ENCODE measurements at regions of chr15 and their contacts with region 1.

Region 1: DNA sequence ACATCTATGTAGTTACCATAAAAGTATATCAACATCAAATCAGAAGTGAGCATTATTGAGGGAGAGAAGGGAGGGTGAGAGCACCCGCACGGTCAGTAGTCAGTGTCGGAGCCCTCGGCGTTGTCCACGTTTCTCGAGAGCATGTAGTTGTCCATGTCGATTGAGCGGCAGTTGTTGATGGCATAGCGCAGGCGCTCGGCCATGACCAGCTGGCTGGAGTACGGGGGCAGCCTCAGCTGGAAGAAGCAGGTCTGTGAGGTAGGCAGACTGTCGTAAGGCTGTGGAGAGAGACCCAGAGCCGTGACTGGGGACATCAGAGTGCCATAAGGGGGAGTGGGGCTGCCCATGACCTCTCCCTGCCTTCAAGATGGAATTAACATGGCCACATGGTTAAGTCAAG is 11.8 kb downstream of the FBXL22 start:
- DNase-seq: no peak
- H3K4me3 ChIP-seq: no peak overlapping the region
- H3K27ac ChIP-seq: no peak overlapping the region
- H3K4me1 ChIP-seq: peaks cover 4% of the 10 kb centered on the region
- H3K27me3 ChIP-seq: no peaks in the 10 kb centered on the region
- CTCF ChIP-seq: no peak
- EP300 ChIP-seq: no peak
- POLR2A ChIP-seq: no peak

Region 2: DNA sequence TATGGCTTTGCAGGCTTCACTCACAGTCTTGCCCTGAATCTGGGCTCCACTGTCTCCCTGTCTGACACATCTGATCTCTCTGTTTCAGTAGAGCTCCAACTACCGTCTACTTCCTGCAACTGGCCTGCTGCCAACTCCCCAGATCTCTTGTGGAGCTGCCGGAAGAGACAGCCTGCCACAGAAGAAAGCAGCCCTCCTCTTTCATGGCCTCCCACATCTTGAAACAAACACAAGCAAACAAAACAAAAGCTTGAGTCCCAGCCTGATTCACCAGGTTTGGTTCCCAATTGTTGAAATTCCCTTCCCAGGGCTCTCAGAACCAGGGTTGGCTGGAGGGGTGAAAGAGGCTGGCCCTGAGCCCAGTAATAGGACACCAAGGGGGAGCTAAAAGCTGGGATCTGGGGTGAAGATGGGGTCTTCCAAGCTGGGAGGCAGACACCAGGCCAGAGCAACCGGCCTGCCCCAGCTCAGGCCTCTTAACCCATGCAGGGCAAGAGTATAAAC is 172.1 kb before region 1 on chr15:
- intact Hi-C with region 1: no loop called
- DNase-seq: peak; percentile 80 to 86 (median 82)
- H3K4me3 ChIP-seq: no peak overlapping the region
- H3K27ac ChIP-seq: peak overlapping the region in 1 of 2 donors; percentile 59
- H3K4me1 ChIP-seq: peaks cover 15% of the 10 kb centered on the region
- H3K27me3 ChIP-seq: no peaks in the 10 kb centered on the region
- CTCF ChIP-seq: no peak
- EP300 ChIP-seq: no peak
- POLR2A ChIP-seq: no peak

Region 3: GRCh38 chr15:63575312-63575711 is 33.7 kb before region 1 on chr15:
- intact Hi-C with region 1: loop called in 1 of 4 experiments (anchors 1 kb)
- DNase-seq: no peak
- H3K4me3 ChIP-seq: no peak overlapping the region
- H3K27ac ChIP-seq: no peak overlapping the region
- H3K4me1 ChIP-seq: no peaks in the 10 kb centered on the region
- H3K27me3 ChIP-seq: no peaks in the 10 kb centered on the region
- CTCF ChIP-seq: no peak
- EP300 ChIP-seq: no peak
- POLR2A ChIP-seq: no peak

Measured in ovary (tissue), 10 donors.